GM10248 (cell line): ENCODE measurements at regions of chr7 and their contacts with region 1.

Region 1: GRCh38 chr7:1432411-1433082 is 26.7 kb downstream of the MICALL2 start:
- DNase-seq: peak; percentile 84
- CTCF ChIP-seq: peak; percentile 99

Region 2: DNA sequence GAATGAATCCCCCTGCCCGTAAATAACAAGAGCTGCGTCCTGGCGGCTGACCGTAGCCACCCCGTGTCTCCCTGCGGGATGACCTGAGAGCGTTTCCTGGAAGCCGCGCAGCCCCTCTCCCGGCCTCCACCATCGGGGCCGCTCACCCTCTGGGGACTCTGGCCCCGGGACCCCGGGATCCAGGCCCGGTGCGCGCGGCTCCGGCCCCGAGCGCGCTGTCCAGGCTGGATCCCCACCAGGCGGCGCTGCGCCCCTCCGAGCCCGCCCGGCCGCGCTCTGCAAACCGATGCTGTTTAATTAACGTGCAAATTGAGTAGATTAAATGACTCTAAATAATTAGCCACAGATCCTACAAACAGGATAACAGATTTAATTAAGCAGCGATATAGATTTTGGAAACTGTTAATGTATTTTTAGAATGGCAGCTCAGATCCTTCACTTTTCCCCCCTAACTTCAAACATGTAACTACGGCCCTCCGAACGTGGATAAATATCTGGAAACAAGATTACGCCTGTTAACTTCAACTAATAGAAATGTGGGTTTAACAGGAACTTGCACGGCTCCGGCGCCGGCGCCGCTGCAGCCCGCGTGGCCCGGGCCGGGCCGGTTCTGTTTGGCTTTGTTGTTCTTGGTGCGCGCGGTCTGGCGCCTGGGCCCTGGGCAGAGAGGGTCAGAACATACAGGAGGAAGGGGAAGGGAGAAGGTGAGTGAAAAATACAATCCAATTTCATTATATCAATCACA is 206.9 kb before region 1 on chr7:
- CTCF ChIA-PET with region 1: interaction called, 43 read pairs
- POLR2A ChIA-PET with region 1: no interaction called
- DNase-seq: peak; percentile 75
- CTCF ChIP-seq: peak; percentile 69

Region 3: DNA sequence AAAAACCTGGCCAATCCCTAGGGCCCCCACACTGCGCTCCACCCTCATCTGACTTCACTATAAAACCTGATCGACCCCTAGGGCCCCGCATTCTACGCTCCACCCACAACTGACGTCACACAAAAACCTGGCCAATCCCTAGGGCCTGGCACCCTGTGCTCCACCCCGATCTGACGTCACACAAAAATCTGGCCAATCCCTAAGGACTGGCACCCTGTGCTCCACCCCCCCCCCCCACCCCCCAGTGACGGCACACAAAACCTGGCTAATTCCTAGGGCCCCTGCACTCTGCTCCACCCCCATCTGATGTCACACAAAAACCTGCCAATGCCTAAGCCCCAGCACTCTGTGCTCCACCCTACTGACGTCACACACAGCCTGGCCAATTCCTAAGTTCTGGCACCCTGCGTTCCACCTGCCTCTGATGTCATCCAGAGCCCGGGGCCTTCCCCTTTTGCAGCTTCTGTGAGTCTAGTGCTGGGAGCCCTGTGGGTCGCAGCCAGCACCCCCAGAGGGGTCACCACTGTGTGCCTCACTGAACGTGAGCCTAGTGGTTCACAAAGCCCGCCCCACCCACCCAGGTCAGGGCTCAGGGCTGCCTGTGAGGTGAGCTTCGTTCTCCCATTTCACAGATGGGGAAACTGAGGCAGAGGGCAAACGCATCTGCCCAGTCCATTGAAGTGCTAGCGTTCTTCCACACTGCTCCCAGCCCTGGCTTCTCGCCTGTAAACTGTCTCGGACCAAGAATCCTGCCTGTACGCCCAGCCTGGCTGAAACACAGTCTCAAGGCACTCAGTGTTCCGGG is 13.8 kb before region 1 on chr7:
- CTCF ChIA-PET with region 1: interaction called, 19 read pairs
- POLR2A ChIA-PET with region 1: no interaction called
- DNase-seq: no peak
- CTCF ChIP-seq: no peak

Region 4: DNA sequence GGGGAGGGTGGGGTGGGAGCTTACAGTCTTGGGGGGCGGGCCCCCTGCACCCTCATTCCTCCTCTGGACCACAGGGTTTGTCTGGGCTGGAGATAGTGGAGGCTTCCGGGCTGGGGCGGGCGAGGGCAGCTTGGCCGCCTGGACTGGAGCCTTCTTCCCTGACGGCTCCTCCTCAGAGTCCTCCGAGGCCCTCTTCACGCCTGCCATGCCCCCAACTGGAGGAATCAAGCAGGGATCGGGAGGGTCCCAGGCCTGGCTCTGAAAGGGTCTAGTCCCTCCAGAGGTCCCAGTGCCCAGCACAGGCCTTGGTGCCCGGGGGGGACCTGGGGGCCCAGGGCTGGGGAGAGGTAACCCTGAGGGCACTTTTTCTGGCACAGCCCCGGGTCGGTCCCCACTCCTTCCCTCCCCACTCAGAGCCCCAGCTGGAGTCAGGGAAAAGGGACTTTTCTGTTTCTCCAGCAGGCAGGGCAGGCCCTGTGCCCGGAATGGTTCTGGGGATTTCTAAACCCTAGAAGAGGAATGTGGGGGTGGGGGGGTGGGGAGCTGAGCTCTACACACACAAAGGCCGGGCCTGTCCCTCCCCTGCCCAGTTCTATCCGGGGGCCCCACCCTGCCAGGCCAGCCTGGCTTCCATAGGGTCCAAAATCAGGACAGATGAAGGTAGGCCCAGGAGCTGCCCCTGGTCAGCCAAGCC is 15.2 kb after region 1 on chr7:
- CTCF ChIA-PET with region 1: interaction called, 10 read pairs
- POLR2A ChIA-PET with region 1: no interaction called
- DNase-seq: no peak
- CTCF ChIP-seq: no peak